ENCODE measurements at regions of chr5 and their contacts with region 1.

Region 1: GRCh38 chr5:150700594-150701293 is at the start of gene RBM22:
- DNase-seq: peak; percentile 90 to 95 (median 91)
- H3K4me3 ChIP-seq: peak within 1 kb of the TSS; percentile 92 to 93
- H3K4me3 Mint-ChIP-seq: peak within 1 kb of the TSS in 1 of 8 donors; percentile 60
- H3K27ac ChIP-seq: peak within 1 kb of the TSS; percentile 94
- H3K27ac Mint-ChIP-seq: peak within 1 kb of the TSS in 1 of 7 donors; percentile 84
- H3K4me1 ChIP-seq: peaks cover 23% of the 10 kb centered on the region
- H3K4me1 Mint-ChIP-seq: peaks cover 0 to 12% (median 4%) of the 10 kb centered on the region in 4 donors
- H3K27me3 ChIP-seq: no peaks in the 10 kb centered on the region
- H3K27me3 Mint-ChIP-seq: no peaks in the 10 kb centered on the region
- total RNA-seq, gene RBM22: 91.0 to 91.2 TPM

Region 2: GRCh38 chr5:150409638-150410523 is 290.9 kb before region 1 on chr5:
- CTCF ChIA-PET with region 1: interaction called, 3 read pairs
- POLR2A ChIA-PET with region 1: interaction called, 8 read pairs
- intact Hi-C with region 1: loop called (anchors 1 kb)
- DNase-seq: peak in 4 of 5 donors; percentile 34 to 54 (median 48)
- H3K4me3 ChIP-seq: peak overlapping the region; percentile 34 to 78
- H3K4me3 Mint-ChIP-seq: peak overlapping the region; percentile 97 to 100 (median 99)
- H3K27ac ChIP-seq: peak overlapping the region; percentile 98
- H3K27ac Mint-ChIP-seq: peak overlapping the region; percentile 99 to 100 (median 99)
- H3K4me1 ChIP-seq: peaks cover 50% of the 10 kb centered on the region
- H3K4me1 Mint-ChIP-seq: peaks cover 26 to 57% (median 38%) of the 10 kb centered on the region in 4 donors
- H3K27me3 ChIP-seq: no peaks in the 10 kb centered on the region
- H3K27me3 Mint-ChIP-seq: no peaks in the 10 kb centered on the region

Region 3: DNA sequence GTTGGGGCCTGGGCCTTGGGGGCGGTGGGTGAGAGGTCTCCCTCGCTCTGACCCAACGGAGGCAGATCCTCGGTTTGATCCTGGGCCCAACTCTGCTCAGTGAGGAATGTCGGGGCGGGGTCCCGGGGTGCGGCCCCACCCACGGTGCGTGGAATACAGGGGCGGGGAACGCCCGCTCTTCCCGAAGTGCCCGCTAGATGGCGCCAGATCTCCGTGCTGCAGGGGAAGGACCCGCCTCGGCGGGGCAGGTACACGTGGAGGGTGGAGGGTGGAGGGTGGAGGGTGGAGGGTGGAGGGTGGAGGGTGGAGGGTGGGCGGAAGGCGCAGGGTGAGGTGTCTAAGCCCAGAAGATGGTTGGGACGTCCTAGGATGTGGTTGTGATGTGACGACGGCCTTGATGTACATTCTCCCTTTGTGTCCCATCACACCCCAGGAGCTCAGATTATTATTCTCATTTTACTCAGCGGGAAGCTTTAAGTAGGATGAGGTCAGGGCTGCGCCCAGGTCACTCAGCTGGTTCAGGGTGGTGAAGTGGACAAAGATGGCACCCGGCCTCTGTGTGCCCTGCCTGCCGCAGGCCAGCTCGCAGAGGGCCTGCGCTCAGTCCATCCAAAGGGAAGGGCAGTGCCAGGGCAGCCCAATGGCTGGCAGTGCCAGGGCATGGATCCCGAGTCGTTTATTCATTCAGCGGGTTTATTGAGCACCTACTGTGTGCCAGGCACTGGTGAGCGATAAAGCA is 241.8 kb before region 1 on chr5:
- CTCF ChIA-PET with region 1: interaction called, 24 read pairs
- POLR2A ChIA-PET with region 1: interaction called, 4 read pairs
- intact Hi-C with region 1: no loop called
- DNase-seq: peak; percentile 82 to 86 (median 82)
- H3K4me3 ChIP-seq: no peak overlapping the region
- H3K4me3 Mint-ChIP-seq: peak overlapping the region in 5 of 8 donors; percentile 29 to 72 (median 49)
- H3K27ac ChIP-seq: no peak overlapping the region
- H3K27ac Mint-ChIP-seq: peak overlapping the region; percentile 52 to 88 (median 70)
- H3K4me1 ChIP-seq: peaks cover 19% of the 10 kb centered on the region
- H3K4me1 Mint-ChIP-seq: peaks cover 12 to 29% (median 21%) of the 10 kb centered on the region in 4 donors
- H3K27me3 ChIP-seq: no peaks in the 10 kb centered on the region
- H3K27me3 Mint-ChIP-seq: no peaks in the 10 kb centered on the region

Region 4: DNA sequence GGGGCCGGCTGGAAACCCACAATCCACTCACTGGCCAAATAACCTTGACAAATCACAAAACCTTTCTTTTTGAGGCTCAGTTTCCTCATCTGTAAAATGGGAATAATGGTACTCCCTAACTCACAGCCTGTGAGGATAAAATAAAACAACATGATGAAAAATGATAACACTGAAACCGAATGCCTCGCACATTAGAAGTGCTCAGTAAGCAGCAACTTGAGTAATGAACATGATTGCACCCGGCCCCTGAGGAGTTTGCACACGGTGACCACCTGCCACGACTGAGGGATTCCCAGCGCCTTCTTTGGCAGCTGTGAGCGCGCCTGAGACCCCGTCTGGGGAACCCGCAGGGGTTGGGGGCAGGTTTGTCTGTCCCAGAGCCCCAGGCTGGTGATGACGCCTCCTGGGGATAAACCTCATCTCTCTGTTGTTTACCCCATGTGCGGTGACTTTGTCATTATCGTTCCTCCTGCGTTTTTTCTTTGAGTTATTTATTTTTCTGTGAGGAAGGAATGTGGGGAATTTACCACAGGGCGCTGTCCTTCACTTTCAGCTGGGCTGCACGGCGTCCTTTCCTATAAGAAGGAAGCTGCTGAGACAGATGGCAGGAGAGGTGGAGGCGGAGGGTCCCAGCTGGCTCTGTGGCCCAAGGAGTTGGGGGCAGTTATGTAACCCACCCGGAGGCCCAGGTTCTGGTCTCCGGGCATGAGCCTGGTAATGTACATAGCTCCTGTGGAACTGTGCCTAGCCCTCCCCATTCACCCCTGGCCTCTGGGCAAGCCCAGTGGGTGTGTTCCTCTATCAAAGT is 63.3 kb before region 1 on chr5:
- CTCF ChIA-PET with region 1: no interaction called
- POLR2A ChIA-PET with region 1: no interaction called
- intact Hi-C with region 1: no loop called
- DNase-seq: no peak
- H3K4me3 ChIP-seq: no peak overlapping the region
- H3K4me3 Mint-ChIP-seq: no peak overlapping the region
- H3K27ac ChIP-seq: no peak overlapping the region
- H3K27ac Mint-ChIP-seq: no peak overlapping the region
- H3K4me1 ChIP-seq: no peaks in the 10 kb centered on the region
- H3K4me1 Mint-ChIP-seq: no peaks in the 10 kb centered on the region
- H3K27me3 ChIP-seq: no peaks in the 10 kb centered on the region
- H3K27me3 Mint-ChIP-seq: peaks cover 7 to 22% of the 10 kb centered on the region in 2 donors

Region 5: DNA sequence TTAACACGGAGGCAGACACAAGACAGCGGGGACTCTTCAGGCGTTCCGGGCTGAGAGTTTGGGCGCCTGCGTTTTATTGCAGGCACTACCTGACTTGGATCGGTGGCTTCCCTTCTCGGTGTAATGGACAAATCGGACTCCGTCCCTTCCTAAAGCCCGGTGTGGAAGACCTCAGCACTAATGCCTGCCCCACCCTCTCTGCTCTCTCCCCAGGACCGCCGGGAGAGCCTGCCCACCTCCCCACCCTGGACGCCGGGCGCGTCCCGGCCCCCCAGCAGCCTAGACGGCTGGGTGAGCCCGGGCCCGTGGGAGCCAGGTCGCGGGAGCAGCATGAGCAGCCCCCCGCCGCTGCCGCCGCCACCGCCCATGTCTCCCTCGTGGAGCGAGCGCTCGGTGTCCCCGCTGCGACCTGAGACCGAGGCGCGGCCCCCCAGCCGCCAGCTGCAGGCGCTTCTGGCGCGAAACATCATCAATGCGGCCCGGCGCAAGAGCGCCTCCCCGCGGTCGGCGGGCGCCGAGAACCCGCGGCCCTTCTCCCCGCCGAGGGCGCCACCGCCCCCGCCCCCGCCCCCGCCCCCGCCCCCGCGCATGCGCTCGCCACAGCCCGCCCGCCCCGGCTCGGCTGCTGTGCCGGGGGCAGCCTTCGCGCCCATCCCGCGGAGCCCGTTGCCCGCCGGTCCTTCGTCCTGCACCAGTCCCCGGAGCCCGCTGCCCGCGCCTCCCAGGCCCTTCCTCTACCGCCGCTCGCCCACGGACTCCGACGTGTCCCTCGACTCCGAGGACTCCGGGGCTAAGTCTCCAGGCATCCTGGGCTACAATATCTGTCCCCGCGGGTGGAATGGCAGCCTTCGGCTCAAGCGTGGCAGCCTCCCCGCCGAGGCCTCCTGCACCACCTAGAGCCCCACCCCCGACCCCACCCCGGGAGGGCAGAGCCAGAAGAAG is 44.3 kb before region 1 on chr5:
- CTCF ChIA-PET with region 1: interaction called, 11 read pairs
- POLR2A ChIA-PET with region 1: interaction called, 8 read pairs
- intact Hi-C with region 1: loop called (anchors 1 kb)
- DNase-seq: peak; percentile 76 to 85 (median 84)
- H3K4me3 ChIP-seq: peak overlapping the region; percentile 17 to 56
- H3K4me3 Mint-ChIP-seq: peak overlapping the region; percentile 81 to 92 (median 83)
- H3K27ac ChIP-seq: peak overlapping the region; percentile 28
- H3K27ac Mint-ChIP-seq: peak overlapping the region in 6 of 7 donors; percentile 11 to 88 (median 70)
- H3K4me1 ChIP-seq: peaks cover 12% of the 10 kb centered on the region
- H3K4me1 Mint-ChIP-seq: peaks cover 3 to 12% (median 9%) of the 10 kb centered on the region in 4 donors
- H3K27me3 ChIP-seq: no peaks in the 10 kb centered on the region
- H3K27me3 Mint-ChIP-seq: no peaks in the 10 kb centered on the region

Region 6: GRCh38 chr5:150758531-150759333 is 58.0 kb after region 1 on chr5 and contains the start of gene DCTN4:
- CTCF ChIA-PET with region 1: interaction called, 33 read pairs
- POLR2A ChIA-PET with region 1: interaction called, 46 read pairs
- intact Hi-C with region 1: loop called (anchors 1 kb)
- DNase-seq: peak; percentile 94 to 97 (median 96)
- H3K4me3 ChIP-seq: peak within 1 kb of the TSS; percentile 78 to 88
- H3K4me3 Mint-ChIP-seq: peak within 1 kb of the TSS in 1 of 8 donors; percentile 7
- H3K27ac ChIP-seq: peak within 1 kb of the TSS; percentile 94
- H3K27ac Mint-ChIP-seq: no peak within 1 kb of the TSS
- H3K4me1 ChIP-seq: peaks cover 29% of the 10 kb centered on the region
- H3K4me1 Mint-ChIP-seq: peaks cover 24 to 36% (median 32%) of the 10 kb centered on the region in 4 donors
- H3K27me3 ChIP-seq: no peaks in the 10 kb centered on the region
- H3K27me3 Mint-ChIP-seq: no peaks in the 10 kb centered on the region
- total RNA-seq, gene DCTN4: 45.5 to 46.0 TPM

Region 7: DNA sequence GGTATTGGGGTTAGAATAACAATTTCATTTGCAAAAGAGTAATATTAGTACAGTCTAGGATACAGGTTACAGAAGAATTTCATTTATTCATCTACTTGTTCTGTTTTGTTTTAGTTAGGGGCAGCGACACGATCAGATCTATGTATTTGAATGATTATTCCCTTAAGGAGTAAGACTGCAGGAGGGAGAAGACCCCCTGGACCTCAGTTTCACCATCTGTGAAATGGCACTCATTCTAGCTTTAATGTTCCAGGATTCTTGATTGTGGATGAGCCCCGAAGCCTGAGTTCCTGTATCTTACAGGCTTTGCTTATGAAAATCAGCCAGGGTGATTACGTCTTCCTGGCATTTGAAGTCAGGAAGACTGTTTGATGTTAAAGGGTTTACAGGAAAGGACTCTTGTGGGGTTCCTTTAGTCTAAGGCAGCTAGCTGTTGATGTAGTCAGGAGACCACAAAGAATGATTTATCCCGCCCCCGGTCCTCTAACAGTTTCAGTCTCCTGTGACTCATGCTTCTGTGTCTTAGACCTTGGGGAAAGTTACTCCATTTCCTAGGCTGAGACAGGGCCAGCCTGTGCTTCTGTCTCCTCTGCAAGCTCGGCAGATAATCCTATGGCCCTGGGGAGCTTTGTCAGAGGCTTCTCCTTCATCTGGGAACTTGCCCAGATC is 89.3 kb after region 1 on chr5:
- CTCF ChIA-PET with region 1: interaction called, 9 read pairs
- POLR2A ChIA-PET with region 1: interaction called, 8 read pairs
- intact Hi-C with region 1: loop called (anchors 1 kb)
- DNase-seq: peak; percentile 39 to 84 (median 44)
- H3K4me3 ChIP-seq: no peak overlapping the region
- H3K4me3 Mint-ChIP-seq: peak overlapping the region in 7 of 8 donors; percentile 4 to 77 (median 57)
- H3K27ac ChIP-seq: peak overlapping the region; percentile 4
- H3K27ac Mint-ChIP-seq: peak overlapping the region; percentile 66 to 94 (median 82)
- H3K4me1 ChIP-seq: peaks cover 34% of the 10 kb centered on the region
- H3K4me1 Mint-ChIP-seq: peaks cover 30 to 51% (median 42%) of the 10 kb centered on the region in 4 donors
- H3K27me3 ChIP-seq: no peaks in the 10 kb centered on the region
- H3K27me3 Mint-ChIP-seq: no peaks in the 10 kb centered on the region

Region 8: GRCh38 chr5:151252762-151253604 is 552.2 kb after region 1 on chr5 and contains the start of gene GM2A:
- CTCF ChIA-PET with region 1: interaction called, 4 read pairs
- POLR2A ChIA-PET with region 1: interaction called, 10 read pairs
- intact Hi-C with region 1: loop called (anchors 2 kb)
- DNase-seq: peak; percentile 96 to 99 (median 97)
- H3K4me3 ChIP-seq: peak within 1 kb of the TSS; percentile 64 to 68
- H3K4me3 Mint-ChIP-seq: peak within 1 kb of the TSS; percentile 89 to 97 (median 94)
- H3K27ac ChIP-seq: peak within 1 kb of the TSS; percentile 66
- H3K27ac Mint-ChIP-seq: peak within 1 kb of the TSS; percentile 86 to 96 (median 94)
- H3K4me1 ChIP-seq: peaks cover 37% of the 10 kb centered on the region
- H3K4me1 Mint-ChIP-seq: peaks cover 17 to 59% (median 36%) of the 10 kb centered on the region in 4 donors
- H3K27me3 ChIP-seq: no peaks in the 10 kb centered on the region
- H3K27me3 Mint-ChIP-seq: no peaks in the 10 kb centered on the region
- total RNA-seq, gene GM2A: 20.4 to 23.1 TPM